GM12878 (cell line): ENCODE measurements at regions of chr1 and their contacts with region 1.

Region 1: GRCh38 chr1:119275145-119276134 is 93.1 kb upstream of the HAO2 start:
- DNase-seq: no peak
- ATAC-seq: peak; percentile 97
- H3K4me3 ChIP-seq: no peak overlapping the region
- H3K27ac ChIP-seq: no peak overlapping the region
- H3K4me1 ChIP-seq: no peaks in the 10 kb centered on the region
- H3K27me3 ChIP-seq: no peaks in the 10 kb centered on the region
- CTCF ChIP-seq: peak; percentile 80 to 95 (median 92)
- EP300 ChIP-seq: no peak
- POLR2A ChIP-seq: no peak
- RAD21 ChIP-seq: peak; percentile 72

Region 2: GRCh38 chr1:118151312-118151937 is 1124.0 kb before region 1 on chr1:
- CTCF ChIA-PET with region 1: interaction called, 5 read pairs
- POLR2A ChIA-PET with region 1: no interaction called
- RAD21 ChIA-PET with region 1: interaction called, 4 read pairs
- SMC1A ChIA-PET with region 1: interaction called, 3 read pairs
- in situ Hi-C with region 1: no loop called
- intact Hi-C with region 1: loop called (anchors 10 kb)
- DNase-seq: peak; percentile 8
- ATAC-seq: peak; percentile 44; the same call in 2 of the 3 replicates
- H3K4me3 ChIP-seq: no peak overlapping the region
- H3K27ac ChIP-seq: no peak overlapping the region
- H3K4me1 ChIP-seq: no peaks in the 10 kb centered on the region
- H3K27me3 ChIP-seq: no peaks in the 10 kb centered on the region
- CTCF ChIP-seq: peak; percentile 73 to 87 (median 74)
- EP300 ChIP-seq: no peak
- POLR2A ChIP-seq: no peak
- RAD21 ChIP-seq: peak; percentile 76

Region 3: DNA sequence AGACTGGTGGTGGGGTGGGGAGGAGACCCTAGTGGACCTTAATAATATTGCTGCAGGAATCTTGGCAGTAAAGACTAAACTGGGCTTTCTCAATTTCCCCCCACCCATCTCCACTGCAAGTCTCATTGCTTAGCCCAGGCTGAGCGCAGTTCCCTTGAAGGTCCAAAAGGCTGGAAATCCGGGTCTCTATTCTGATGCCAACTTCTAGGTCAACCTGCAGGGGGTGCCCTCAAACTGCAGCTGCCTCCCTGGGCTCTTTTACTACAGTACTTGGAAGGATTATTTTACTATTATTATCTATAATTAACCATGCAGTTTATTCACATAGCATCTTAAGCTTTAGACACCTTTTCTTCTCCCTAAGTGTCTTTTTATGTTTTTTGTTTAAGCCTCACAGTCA is 49.6 kb before region 1 on chr1:
- CTCF ChIA-PET with region 1: interaction called, 96 read pairs
- POLR2A ChIA-PET with region 1: no interaction called
- RAD21 ChIA-PET with region 1: interaction called, 27 read pairs
- SMC1A ChIA-PET with region 1: interaction called, 32 read pairs
- in situ Hi-C with region 1: no loop called
- intact Hi-C with region 1: loop called (anchors 2 kb)
- DNase-seq: no peak
- ATAC-seq: no peak
- H3K4me3 ChIP-seq: no peak overlapping the region
- H3K27ac ChIP-seq: no peak overlapping the region
- H3K4me1 ChIP-seq: peaks cover 4% of the 10 kb centered on the region; the same call in 1 of the 2 replicates
- H3K27me3 ChIP-seq: no peaks in the 10 kb centered on the region
- CTCF ChIP-seq: peak; percentile 6 to 26 (median 19); a peak in 3 of 6 replicates
- EP300 ChIP-seq: no peak
- POLR2A ChIP-seq: no peak
- RAD21 ChIP-seq: peak; percentile 16; the same call in 1 of the 2 replicates

Region 4: DNA sequence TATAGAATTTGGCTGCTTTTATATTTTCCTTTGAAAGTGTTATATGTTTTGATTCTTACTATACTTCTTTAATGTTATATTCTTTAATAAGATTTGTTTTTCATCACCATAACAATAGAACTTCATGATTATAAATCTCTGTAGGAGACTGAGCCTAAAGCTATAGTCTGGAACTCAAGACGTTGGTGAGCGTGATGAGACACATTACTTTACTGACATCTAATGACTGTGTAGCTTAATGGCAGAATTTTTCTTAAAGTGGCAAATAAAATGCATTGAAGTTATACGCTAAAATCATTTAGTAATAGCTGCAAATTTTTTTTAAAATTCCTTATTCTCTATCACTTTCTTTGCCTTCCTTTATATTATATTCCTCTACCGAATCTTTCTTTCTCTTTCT is 37.1 kb after region 1 on chr1:
- CTCF ChIA-PET with region 1: interaction called, 21 read pairs
- POLR2A ChIA-PET with region 1: no interaction called
- RAD21 ChIA-PET with region 1: interaction called, 6 read pairs
- SMC1A ChIA-PET with region 1: interaction called, 6 read pairs
- in situ Hi-C with region 1: no loop called
- intact Hi-C with region 1: no loop called
- DNase-seq: no peak
- ATAC-seq: no peak
- H3K4me3 ChIP-seq: no peak overlapping the region
- H3K27ac ChIP-seq: no peak overlapping the region
- H3K4me1 ChIP-seq: no peaks in the 10 kb centered on the region; the same call in 1 of the 2 replicates
- H3K27me3 ChIP-seq: peaks cover 0 to 5% of the 10 kb centered on the region in 2 experiments; a peak in 1 of 4 replicates
- CTCF ChIP-seq: no peak
- EP300 ChIP-seq: no peak
- POLR2A ChIP-seq: no peak
- RAD21 ChIP-seq: no peak

Region 5: DNA sequence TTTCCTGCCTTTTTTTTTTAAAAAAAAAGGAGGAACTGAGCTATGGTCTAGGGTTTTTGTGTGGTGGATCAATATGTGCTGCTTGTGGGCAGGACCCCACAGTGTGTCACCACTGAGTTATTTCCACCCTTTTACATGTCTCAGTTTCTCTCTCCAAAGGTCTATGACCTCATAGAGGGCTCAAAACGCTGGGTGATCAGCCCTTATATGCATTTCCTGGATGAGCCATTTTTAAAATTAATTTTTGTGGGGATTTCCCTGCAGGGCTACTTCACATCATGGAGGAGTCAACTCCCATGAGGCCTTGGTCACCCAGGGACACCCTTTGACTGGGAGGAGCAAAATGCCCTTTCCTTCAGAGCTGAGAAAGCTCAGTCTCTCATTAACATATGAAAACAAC is 72.4 kb after region 1 on chr1:
- CTCF ChIA-PET with region 1: interaction called, 21 read pairs
- POLR2A ChIA-PET with region 1: no interaction called
- RAD21 ChIA-PET with region 1: no interaction called
- SMC1A ChIA-PET with region 1: interaction called, 4 read pairs
- in situ Hi-C with region 1: no loop called
- intact Hi-C with region 1: no loop called
- DNase-seq: peak; percentile 77
- ATAC-seq: peak; percentile 96
- H3K4me3 ChIP-seq: no peak overlapping the region
- H3K27ac ChIP-seq: no peak overlapping the region
- H3K4me1 ChIP-seq: peaks cover 5% of the 10 kb centered on the region; the same call in 1 of the 2 replicates
- H3K27me3 ChIP-seq: no peaks in the 10 kb centered on the region
- CTCF ChIP-seq: no peak
- EP300 ChIP-seq: 0 out of 4 replicates have a peak, but pooled peaks of 1 of the 2 experiments have one; percentile 43
- POLR2A ChIP-seq: no peak
- RAD21 ChIP-seq: no peak

Region 6: DNA sequence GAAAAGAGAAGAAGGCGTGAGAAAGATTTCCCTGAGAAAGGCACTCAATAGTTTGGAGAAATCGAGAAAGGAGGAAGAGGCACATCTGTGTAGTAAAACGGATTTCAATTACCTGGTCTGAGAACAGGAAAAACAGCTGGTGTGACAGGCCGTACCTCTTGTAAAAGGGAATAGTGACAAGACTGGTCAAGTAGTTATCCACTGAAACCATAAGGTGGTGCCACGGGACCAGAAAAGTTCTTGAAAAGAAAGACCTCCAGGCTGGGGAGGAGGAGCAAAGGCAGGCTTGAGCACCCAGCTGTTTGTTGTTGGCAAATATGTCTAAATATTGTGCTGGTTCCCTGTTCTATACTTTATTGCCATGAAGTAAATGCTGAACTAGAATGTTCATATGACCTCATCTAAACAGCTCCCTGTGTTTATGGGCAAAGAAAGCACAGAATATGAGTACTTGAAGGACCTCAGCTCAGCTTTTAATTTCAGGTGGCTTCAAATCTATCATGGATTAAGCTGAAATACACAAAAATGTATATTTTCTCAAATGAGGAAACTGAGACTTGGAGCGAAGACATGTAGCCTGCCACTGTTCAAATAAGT is 97.1 kb after region 1 on chr1:
- CTCF ChIA-PET with region 1: interaction called, 144 read pairs
- POLR2A ChIA-PET with region 1: no interaction called
- RAD21 ChIA-PET with region 1: interaction called, 58 read pairs
- SMC1A ChIA-PET with region 1: interaction called, 73 read pairs
- in situ Hi-C with region 1: no loop called
- intact Hi-C with region 1: loop called (anchors 1 kb)
- DNase-seq: no peak
- ATAC-seq: peak; percentile 83
- H3K4me3 ChIP-seq: no peak overlapping the region
- H3K27ac ChIP-seq: no peak overlapping the region
- H3K4me1 ChIP-seq: peaks cover 5% of the 10 kb centered on the region; the same call in 1 of the 2 replicates
- H3K27me3 ChIP-seq: no peaks in the 10 kb centered on the region
- CTCF ChIP-seq: peak in 2 of 3 experiments; percentile 35 to 57; a peak in 4 of 6 replicates
- EP300 ChIP-seq: no peak
- POLR2A ChIP-seq: no peak
- RAD21 ChIP-seq: peak; percentile 56